ENCODE measurements at regions of chr5 and their contacts with region 1.

Region 1: DNA sequence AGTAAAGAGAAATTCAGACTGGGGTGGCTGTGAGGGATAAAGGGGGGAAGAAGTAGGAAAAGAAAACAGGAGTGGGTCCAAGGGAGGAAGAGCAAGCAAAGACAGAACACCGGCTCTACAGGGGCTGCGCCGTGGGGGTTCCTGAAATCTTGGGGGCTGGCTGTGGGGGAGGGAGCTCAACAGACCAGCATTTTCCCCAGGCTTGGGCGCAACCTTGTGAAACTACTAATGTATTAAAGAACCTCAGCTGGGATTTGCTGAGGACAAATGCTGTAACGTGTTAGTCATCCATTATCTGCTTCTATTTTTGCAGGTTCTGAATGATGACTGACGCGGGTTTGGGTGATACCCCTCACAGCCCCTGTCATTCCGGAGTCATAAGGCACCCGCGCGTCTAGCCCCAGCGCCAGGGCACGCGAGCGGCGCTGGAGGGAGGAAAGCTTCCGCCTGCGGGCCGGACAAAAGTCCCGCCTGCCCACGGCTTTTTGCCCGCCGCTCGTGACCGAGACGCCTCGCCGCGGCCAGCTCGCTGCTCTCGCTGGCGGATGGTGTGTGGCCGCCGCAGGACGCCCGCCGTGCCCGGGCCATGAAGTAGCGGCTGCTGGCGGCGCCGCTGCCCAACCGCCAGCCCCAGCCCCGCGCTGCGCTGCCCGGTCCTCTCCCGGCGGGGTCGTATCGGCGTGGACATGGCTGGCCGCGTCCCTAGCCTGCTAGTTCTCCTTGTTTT is 110.6 kb downstream of the PAM start:
- DNase-seq: peak; percentile 22 to 92 (median 51)

Region 2: DNA sequence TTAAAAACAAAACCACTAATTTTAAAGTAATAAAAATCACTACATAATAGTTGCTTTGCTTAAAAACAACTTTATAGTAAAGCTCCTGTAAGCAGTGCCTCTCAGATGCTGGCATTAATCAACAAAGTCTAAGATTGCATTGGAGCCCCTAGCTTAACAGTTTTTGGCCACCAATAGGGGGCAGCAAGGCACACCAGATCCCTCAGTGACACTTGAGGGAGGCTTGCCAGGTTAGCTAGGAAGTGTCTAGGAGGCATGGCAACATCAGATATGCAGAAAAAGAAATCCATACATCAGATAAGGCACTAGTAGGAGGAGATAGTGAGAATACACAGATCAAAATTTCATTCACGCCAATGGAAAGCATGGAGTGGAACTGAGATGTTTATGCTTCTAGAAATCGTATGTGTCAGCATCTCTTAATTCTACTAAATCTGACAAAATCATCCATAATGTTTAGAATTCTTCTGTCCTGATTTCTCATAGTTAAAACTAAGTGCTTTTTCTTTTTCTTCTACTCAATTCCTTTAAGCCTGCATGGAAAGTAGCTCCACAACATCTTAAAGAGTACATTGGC is 184.2 kb before region 1 on chr5:
- intact Hi-C with region 1: no loop called
- DNase-seq: peak in 9 of 10 donors; percentile 28 to 94 (median 71)

Region 3: DNA sequence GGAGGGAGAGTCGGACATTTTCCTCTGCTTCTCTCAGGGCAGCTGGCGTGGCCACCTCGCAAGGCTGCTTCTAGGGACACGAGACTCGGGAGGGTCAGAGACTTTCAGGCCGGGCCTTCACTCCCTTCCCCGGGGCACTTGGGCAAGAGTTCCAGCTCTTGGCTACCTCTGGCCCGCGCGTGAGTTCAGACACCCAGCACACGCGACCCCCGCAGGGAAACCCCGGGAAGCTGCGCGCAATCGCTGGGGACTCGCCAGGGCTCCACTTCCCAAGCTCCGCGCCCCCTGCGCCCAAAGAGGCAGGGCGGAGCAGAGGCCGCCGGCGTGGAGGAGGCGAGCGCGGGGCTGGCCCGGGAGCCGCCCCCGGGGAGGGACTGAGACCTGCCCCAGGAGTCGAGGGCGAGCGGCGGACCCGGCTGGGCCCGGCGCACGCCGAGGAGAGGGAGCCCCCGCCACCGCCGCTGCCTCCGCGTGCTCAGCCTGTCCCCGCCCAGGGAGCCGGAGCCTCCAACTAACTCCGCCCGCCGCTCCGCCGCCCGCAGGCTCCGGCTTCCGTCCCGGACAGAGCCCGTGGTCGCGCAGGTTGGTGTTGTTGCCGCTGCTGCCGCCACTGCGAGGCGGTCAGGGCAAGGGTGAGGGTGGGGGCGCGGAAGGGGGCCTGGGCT is 110.8 kb before region 1 on chr5 and contains the start of gene PAM:
- intact Hi-C with region 1: loop called (anchors 10 kb)
- DNase-seq: peak; percentile 50 to 96 (median 70)